Activated CD8-positive, alpha-beta T cell treated with anti-CD3 and anti-CD28 coated beads for 36 hours (primary cell): ENCODE measurements at regions of chr22 and their contacts with region 1.

Region 1: DNA sequence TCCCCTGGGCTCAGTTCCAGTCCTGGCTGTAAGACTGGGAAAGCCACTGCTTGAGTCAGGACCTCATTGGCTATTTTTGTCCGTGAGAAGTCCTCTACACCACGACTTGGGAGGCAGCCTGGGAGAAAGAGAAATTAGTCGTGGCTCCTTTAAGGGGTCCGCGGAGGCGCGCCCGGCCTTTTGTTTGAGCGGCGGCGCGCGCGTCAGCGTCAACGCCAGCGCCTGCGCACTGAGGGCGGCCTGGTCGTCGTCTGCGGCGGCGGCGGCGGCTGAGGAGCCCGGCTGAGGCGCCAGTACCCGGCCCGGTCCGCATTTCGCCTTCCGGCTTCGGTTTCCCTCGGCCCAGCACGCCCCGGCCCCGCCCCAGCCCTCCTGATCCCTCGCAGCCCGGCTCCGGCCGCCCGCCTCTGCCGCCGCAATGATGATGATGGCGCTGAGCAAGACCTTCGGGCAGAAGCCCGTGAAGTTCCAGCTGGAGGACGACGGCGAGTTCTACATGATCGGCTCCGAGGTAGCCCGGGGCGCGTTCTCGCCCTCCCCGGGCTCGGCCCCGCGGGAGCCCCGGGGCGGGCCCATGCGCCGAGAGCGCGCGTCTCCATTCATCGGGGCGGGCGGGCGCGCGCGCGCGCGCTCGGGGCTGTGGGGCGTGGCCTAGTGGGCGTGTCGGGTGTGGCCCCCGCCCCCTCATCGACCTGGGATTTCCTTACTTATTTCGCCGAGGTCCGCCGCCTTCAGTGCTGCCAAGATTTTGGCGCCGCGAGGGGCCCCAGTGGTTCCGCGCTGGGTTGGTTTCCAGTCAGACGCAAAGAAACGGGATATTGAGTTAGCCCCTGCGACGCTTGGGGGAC is at the start of gene SMARCB1:
- DNase-seq: peak; percentile 93
- ATAC-seq: peak; percentile 83
- H3K4me3 Mint-ChIP-seq: peak within 1 kb of the TSS; percentile 84
- H3K27ac Mint-ChIP-seq: peak within 1 kb of the TSS; percentile 96
- H3K4me1 Mint-ChIP-seq: peaks cover 36% of the 10 kb centered on the region
- H3K27me3 Mint-ChIP-seq: no peaks in the 10 kb centered on the region
- CTCF ChIP-seq: no peak
- total RNA-seq, gene SMARCB1: 82.8 to 86.3 TPM

Region 2: GRCh38 chr22:23657727-23658126 is 129.2 kb before region 1 on chr22:
- CTCF ChIA-PET with region 1: no interaction called
- POLR2A ChIA-PET with region 1: no interaction called
- intact Hi-C with region 1: no loop called
- DNase-seq: no peak
- ATAC-seq: no peak
- H3K4me3 Mint-ChIP-seq: no peak overlapping the region
- H3K27ac Mint-ChIP-seq: no peak overlapping the region
- H3K4me1 Mint-ChIP-seq: peaks cover 2% of the 10 kb centered on the region
- H3K27me3 Mint-ChIP-seq: no peaks in the 10 kb centered on the region
- CTCF ChIP-seq: no peak

Region 3: DNA sequence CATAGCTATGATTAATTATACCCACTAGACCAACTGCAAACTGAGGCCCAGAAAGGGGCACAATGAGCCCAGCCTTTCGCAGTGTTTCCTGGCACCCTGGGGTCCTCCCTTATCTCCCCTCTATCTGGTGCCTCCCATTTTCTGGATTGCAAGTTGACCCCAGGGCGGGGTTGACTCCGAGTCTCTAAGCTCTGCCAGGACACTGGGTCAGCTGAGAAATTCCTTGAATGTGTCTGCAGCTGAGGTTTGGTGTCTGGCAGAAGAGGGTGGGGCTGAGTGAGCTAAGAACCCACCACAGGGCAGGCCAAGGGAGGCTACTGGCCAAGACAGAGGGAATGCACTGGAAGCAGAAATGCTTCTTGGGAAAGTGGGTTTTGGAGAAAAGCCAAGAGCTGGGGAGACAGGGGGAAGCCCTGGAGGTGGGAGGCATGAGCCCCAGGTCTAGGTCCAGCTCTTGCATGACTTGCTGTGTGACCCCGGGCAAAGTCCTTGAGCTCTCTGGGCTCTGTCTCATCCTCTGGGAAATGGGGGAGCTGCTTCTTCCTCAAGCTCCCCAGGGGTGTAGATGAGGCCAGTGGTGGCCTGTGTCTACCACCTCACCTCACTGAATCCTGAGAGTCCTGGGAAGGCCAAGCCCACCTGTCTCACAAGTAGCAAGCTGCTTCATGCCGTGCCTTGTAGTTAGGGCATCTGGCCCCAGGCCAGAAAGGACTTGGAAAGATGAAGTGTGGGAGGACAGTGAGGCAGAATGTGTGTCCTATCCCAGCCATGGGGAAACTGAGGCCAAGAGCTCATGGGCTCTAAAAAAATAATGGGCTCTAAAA is 12.0 kb before region 1 on chr22:
- CTCF ChIA-PET with region 1: interaction called, 6 read pairs
- POLR2A ChIA-PET with region 1: interaction called, 14 read pairs
- intact Hi-C with region 1: no loop called
- DNase-seq: no peak
- ATAC-seq: no peak
- H3K4me3 Mint-ChIP-seq: no peak overlapping the region
- H3K27ac Mint-ChIP-seq: no peak overlapping the region
- H3K4me1 Mint-ChIP-seq: peaks cover 11% of the 10 kb centered on the region
- H3K27me3 Mint-ChIP-seq: no peaks in the 10 kb centered on the region
- CTCF ChIP-seq: no peak

Region 4: GRCh38 chr22:23878219-23878618 is 91.2 kb after region 1 on chr22:
- CTCF ChIA-PET with region 1: no interaction called
- POLR2A ChIA-PET with region 1: no interaction called
- intact Hi-C with region 1: no loop called
- DNase-seq: no peak
- ATAC-seq: no peak
- H3K4me3 Mint-ChIP-seq: no peak overlapping the region
- H3K27ac Mint-ChIP-seq: no peak overlapping the region
- H3K4me1 Mint-ChIP-seq: no peaks in the 10 kb centered on the region
- H3K27me3 Mint-ChIP-seq: no peaks in the 10 kb centered on the region
- CTCF ChIP-seq: no peak